ENCODE measurements at regions of chr16 and their contacts with region 1.

Region 1: DNA sequence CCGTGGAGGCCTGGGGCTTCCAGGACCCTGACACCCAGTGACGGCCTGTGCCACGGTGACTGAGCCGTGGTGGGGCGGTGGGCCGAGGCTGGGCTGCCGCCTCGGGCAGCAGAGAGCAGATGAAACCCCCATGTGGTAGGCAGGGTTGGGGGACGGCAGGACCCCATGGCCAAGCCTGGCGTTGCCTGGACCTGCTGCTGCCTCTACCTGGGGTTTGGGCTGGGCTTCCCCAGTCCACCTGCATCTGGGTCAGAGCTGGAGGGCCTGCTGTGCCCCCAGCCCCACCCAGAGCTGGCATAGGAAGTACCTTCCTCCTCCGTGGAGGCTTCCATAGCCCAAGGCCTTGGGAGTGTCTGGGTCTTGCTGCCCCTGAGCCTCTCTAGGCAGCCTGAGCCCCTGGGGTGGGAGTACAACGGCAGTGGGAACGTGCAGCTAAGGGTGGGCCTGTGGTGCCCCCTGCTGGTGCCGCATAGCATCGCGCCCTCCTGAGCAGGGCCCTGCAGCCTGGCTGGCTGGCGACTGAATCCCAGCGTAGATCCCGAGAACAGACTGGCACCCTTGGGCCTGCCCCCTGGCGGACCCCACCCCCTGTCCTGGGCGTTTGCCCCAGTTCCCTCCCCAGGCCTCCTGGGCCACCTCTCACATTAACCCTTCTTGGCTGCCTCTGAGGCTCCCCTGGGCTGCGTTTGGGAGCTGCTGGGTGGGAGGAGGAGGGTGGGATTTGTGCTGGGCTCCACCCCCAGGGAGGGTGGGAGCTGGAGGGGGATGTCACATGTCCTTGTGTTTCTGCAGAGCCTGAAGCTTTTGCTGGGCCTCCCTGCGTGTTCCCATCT is 12.6 kb upstream of the ATP6V0C start:
- DNase-seq: peak; percentile 72 to 94 (median 84)
- ATAC-seq: peak; percentile 75 to 89 (median 84)
- H3K4me3 ChIP-seq: peak overlapping the region in 1 of 4 donors; percentile 7
- H3K27ac ChIP-seq: peak overlapping the region in 2 of 4 donors; percentile 29 to 74
- H3K4me1 ChIP-seq: peaks cover 21 to 25% (median 22%) of the 10 kb centered on the region in 3 donors
- H3K27me3 ChIP-seq: no peaks in the 10 kb centered on the region
- CTCF ChIP-seq: peak; percentile 96 to 99 (median 98)

Region 2: DNA sequence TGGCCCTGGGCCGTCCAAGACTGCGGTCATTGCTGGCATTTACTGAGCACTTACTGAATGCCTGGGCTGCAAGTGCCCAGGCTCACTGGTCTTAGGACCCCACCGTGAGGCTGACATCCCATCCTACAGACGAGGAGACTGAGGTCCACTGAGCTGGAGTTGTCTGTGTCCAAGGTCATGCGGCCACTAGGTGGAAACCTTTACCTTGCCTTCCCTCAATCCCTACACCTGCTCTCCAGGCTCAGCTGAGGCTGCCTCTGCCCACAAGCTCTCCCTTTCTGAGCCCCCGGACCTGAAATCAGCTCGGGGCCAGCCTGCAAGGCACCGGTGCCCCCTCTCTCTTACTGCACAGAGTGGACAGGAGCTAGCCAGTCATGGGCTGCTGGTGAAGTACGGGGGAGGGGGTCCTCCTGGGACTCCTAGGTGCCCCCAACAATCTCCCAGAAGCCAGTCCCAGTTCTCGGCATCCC is 306.2 kb before region 1 on chr16:
- intact Hi-C with region 1: loop called in 1 of 3 experiments (anchors 5 kb)
- DNase-seq: peak in 3 of 6 donors; percentile 53 to 68 (median 67)
- ATAC-seq: peak; percentile 79 to 94 (median 90)
- H3K4me3 ChIP-seq: no peak overlapping the region
- H3K27ac ChIP-seq: no peak overlapping the region
- H3K4me1 ChIP-seq: peaks cover 5 to 7% (median 7%) of the 10 kb centered on the region in 3 donors
- H3K27me3 ChIP-seq: no peaks in the 10 kb centered on the region
- CTCF ChIP-seq: peak; percentile 17 to 49 (median 35)

Region 3: DNA sequence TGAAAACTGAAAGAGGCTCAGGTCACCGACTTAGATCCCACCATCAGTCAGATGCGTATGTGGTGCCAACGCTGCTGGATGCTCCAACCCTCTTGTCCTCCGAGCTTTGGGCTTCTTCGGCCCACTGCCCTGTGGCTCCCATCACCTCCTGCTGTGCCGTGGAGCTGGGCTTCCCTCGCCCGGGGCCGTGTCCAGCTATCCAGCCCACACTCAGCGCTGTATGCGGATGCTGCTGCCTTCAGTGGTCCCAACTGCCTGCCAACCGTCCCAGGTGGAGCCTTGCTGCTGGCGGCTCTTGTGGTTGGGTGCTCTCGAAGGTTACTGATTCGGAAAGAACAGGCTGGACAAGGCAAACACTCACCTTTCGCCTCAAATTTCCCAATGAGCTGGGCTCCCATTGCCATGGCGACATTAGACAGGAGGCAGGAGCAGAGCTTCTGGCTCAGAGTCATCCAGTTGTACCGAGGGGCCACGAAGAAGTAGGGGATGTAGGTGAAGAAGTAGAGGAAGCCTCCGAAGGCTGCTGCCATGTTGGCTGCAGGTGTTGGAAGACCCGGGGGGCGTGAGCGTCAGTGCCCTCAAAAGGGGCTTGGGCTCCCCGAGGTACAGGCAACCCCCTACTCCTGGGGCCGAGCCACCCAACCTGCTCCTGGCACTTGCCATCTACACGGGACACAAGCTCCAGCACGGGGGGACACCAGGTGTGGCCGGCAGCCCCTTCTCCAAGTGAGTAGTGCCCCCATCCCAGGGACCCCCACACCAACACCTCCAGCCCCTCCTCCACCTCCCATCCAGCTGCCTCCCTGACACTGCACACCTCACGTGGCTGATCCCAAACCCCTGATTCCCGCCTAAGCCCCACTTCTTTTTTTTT is 192.8 kb before region 1 on chr16:
- intact Hi-C with region 1: loop called in 1 of 3 experiments (anchors 10 kb)
- DNase-seq: no peak
- ATAC-seq: peak in 2 of 4 donors; percentile 44 to 56
- H3K4me3 ChIP-seq: no peak overlapping the region
- H3K27ac ChIP-seq: no peak overlapping the region
- H3K4me1 ChIP-seq: no peaks in the 10 kb centered on the region
- H3K27me3 ChIP-seq: no peaks in the 10 kb centered on the region
- CTCF ChIP-seq: no peak

Region 4: GRCh38 chr16:2340564-2341455 is 160.3 kb before region 1 on chr16 and contains the start of gene ABCA3:
- intact Hi-C with region 1: loop called in 1 of 3 experiments (anchors 5 kb)
- DNase-seq: peak; percentile 87 to 100 (median 97)
- ATAC-seq: peak; percentile 87 to 96 (median 92)
- H3K4me3 ChIP-seq: peak within 1 kb of the TSS; percentile 65 to 86 (median 78)
- H3K27ac ChIP-seq: peak within 1 kb of the TSS in 1 of 4 donors; percentile 24
- H3K4me1 ChIP-seq: peaks cover 0 to 5% (median 4%) of the 10 kb centered on the region in 3 donors
- H3K27me3 ChIP-seq: no peaks in the 10 kb centered on the region
- CTCF ChIP-seq: peak; percentile 100
- total RNA-seq, gene ABCA3: 12.7 to 26.5 (median 16.5) TPM

Region 5: DNA sequence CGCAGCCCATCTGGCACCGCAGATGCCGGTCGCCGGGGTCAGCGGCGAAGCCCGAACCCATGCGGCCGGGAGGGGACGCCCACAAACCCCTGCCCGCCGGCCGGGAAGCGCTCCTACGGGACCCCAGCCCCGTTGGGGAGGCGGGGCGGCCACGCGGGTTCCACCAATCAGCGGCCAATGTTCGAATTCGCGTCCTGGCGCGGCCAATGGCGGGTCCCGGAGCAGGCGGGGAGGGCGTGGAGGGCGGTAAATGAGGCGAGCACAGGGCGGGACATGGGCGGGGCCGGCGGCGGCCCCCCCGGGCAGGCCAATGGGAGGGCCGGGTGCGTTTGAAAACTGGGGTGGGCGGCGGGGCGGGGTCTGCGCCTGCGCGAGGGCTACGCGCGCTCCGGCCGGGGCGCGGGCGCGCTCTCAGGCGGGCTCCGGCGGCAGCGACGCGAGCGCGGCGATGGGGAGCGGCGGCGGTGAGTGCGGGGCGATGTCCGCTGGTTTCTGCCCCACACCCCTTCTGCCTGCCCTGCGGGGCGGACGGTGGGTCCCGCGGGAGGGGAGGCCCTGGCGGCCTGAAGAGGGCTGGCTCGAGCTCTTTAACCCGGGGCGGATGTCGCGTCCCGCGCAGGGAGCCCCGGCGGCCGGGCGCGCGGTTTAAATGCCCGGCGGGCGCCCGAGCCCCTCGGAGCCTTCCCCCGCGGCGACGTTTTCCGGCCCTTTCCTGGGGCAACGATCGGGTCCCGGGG is 71.9 kb before region 1 on chr16 and contains the start of gene CCNF:
- intact Hi-C with region 1: loop called in 1 of 3 experiments (anchors 10 kb)
- DNase-seq: peak; percentile 97 to 99 (median 98)
- ATAC-seq: peak; percentile 95 to 98 (median 96)
- H3K4me3 ChIP-seq: peak within 1 kb of the TSS; percentile 83 to 94 (median 90)
- H3K27ac ChIP-seq: peak within 1 kb of the TSS in 3 of 4 donors; percentile 46 to 76 (median 73)
- H3K4me1 ChIP-seq: peaks cover 0 to 6% (median 6%) of the 10 kb centered on the region in 3 donors
- H3K27me3 ChIP-seq: no peaks in the 10 kb centered on the region
- CTCF ChIP-seq: no peak
- total RNA-seq, gene CCNF: 0.69 to 2.6 (median 1.3) TPM

Region 6: GRCh38 chr16:2436110-2436509 is 65.0 kb before region 1 on chr16:
- intact Hi-C with region 1: loop called in 2 of 3 experiments (anchors 2 to 10 kb)
- DNase-seq: peak in 1 of 6 donors; percentile 29
- ATAC-seq: no peak
- H3K4me3 ChIP-seq: no peak overlapping the region
- H3K27ac ChIP-seq: no peak overlapping the region
- H3K4me1 ChIP-seq: no peaks in the 10 kb centered on the region
- H3K27me3 ChIP-seq: no peaks in the 10 kb centered on the region
- CTCF ChIP-seq: no peak

Region 7: GRCh38 chr16:2777231-2777902 is 276.2 kb after region 1 on chr16 and contains the start of gene ELOB:
- intact Hi-C with region 1: no loop called
- DNase-seq: peak; percentile 84 to 97 (median 88)
- ATAC-seq: peak; percentile 93 to 96 (median 94)
- H3K4me3 ChIP-seq: peak within 1 kb of the TSS; percentile 92 to 100 (median 99)
- H3K27ac ChIP-seq: peak within 1 kb of the TSS; percentile 99 to 100 (median 100)
- H3K4me1 ChIP-seq: peaks cover 8 to 20% (median 8%) of the 10 kb centered on the region in 3 donors
- H3K27me3 ChIP-seq: no peaks in the 10 kb centered on the region
- CTCF ChIP-seq: no peak
- total RNA-seq, gene ELOB: 69.9 to 107 (median 95.0) TPM

Region 8: DNA sequence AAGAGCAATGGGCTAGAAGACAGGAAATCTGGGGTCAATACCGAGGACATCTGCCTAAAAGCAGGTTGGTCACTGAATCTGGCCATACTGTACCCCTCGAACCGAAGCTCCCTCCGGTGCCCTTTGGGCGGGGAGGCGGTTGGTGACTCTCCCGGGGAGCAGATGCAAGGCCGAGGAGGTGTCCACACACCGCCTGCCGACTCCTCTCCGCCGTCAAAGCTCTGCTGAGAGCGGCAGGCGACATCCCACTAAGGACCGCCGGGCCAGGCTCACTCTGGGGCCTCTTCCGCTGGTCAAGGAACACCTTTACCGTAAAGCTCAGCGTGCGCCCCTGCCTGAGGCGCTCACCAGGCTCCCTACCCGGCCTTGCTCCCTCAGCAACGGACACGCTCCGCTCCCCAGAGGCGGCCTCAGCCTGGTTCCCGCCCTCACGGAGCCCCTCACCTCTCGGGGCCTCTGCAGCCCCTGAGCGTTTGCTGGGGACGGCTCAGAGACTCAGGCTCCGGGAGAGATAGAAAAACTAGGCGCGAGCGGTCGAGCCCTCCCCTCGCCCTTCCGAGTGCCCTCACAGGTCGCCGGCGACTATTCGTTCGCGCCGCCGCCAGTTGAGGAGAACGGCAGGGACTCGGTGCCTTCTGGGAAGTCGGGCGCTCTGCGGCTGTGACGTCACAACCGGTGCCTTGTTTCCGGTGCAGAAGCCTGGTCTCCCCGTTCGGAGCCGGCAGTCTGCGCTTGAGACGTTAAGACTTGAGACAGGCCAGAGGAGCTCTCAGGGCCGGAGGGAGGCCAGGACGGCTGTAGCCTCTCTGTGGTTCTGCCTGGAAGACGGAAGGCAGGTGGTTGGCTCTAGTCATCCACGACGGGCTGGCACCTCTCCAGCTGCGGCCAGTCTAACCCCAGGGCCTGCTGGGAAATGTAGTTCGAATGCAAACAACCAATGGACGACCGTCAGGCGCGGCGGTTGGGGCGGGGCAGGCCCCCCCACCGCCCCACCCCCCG is 733.7 kb after region 1 on chr16 and contains the start of gene ZNF200:
- intact Hi-C with region 1: no loop called
- DNase-seq: peak; percentile 93 to 98 (median 96)
- ATAC-seq: peak; percentile 98 to 100 (median 100)
- H3K4me3 ChIP-seq: peak within 1 kb of the TSS; percentile 68 to 93 (median 86)
- H3K27ac ChIP-seq: peak within 1 kb of the TSS; percentile 50 to 92 (median 83)
- H3K4me1 ChIP-seq: peaks cover 0 to 8% (median 0%) of the 10 kb centered on the region in 3 donors
- H3K27me3 ChIP-seq: no peaks in the 10 kb centered on the region
- CTCF ChIP-seq: no peak
- total RNA-seq, gene ZNF200: 1.5 to 3.7 (median 2.2) TPM

Region 9: DNA sequence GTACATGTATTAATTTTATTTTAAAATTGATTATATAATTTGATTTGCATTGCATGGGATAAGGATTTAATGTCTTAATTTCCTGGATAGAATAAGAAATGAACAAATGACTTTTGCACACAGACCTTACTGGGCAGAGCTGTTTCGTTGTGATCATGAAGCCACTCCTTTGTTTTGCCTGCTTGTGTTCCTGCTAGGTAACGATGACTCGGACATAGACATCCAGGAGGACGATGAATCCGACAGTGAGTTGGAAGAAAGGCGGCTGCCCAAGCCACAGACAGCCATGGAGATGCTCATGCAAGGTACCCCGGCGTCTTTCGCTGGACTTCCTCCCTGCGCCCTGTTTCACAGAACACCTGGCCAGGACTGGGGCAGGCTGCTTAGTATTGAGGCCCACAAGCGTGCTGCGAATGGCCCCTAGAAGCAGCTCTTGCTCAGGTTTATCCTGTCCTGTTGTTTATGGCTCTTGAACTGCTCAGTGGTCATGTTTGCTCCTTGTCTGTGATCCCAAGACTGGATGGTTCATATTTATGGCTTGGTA is 1029.3 kb after region 1 on chr16:
- intact Hi-C with region 1: no loop called
- DNase-seq: no peak
- ATAC-seq: no peak
- H3K4me3 ChIP-seq: no peak overlapping the region
- H3K27ac ChIP-seq: no peak overlapping the region
- H3K4me1 ChIP-seq: no peaks in the 10 kb centered on the region
- H3K27me3 ChIP-seq: no peaks in the 10 kb centered on the region
- CTCF ChIP-seq: no peak

Measured in pancreas (tissue), 10 donors.